Activated CD4-positive, alpha-beta memory T cell treated with anti-CD3 and anti-CD28 coated beads, Interleukin-2, amount 10 ng/mL, durations not matched to agents 7 days and 5 days (primary cell): ENCODE measurements at regions of chr6 and their contacts with region 1.

Region 1: GRCh38 chr6:41735427-41736356 is at the start of gene TFEB:
- DNase-seq: peak; percentile 95
- H3K4me3 Mint-ChIP-seq: peak within 1 kb of the TSS; percentile 79
- H3K27ac Mint-ChIP-seq: peak within 1 kb of the TSS; percentile 64
- H3K4me1 Mint-ChIP-seq: peaks cover 30% of the 10 kb centered on the region
- H3K27me3 Mint-ChIP-seq: peaks cover 2% of the 10 kb centered on the region
- total RNA-seq, gene TFEB: 14.9 to 15.0 TPM

Region 2: DNA sequence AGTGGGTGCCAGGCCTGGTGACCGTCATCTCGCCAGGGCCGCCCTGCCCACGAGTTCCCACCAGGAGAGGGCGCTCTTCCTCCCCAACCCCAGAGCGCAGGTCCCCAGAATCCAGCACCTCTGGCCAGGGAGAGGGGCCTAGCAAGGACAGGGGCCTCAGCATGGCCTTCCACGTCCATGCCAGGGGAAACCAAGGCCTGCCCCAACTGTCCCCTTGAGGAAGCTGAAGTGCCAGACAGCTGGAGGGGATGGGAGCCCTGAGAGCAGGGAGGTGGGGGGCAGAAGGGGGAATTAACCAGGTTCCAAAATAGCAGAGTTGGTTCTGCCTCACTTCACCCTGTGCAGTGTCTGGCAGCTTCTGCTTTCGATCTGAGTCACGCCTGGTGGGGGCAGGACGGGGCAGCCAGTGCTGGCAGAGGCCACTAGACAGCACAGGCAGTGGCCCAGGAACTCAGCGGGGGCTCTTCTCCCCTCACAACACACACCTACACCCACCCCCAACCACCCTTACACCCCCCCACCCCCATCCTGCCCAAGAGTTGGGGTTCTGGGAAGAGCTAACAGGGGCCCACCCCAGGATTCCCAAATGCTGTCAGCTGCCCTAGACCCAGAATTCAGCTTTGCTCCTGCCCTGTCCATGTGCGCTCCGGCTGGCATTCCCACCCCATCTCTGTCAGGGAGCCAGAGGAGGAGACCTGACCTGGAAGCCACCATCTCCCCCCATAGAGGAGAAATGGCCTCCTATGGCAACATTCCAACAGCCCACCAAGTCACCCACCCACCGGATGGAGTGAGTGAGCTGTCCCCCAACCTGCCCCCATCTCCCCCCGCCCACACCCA is 29.5 kb before region 1 on chr6:
- CTCF ChIA-PET with region 1: interaction called, 9 read pairs
- POLR2A ChIA-PET with region 1: interaction called, 35 read pairs
- DNase-seq: peak; percentile 81
- H3K4me3 Mint-ChIP-seq: peak overlapping the region; percentile 30
- H3K27ac Mint-ChIP-seq: peak overlapping the region; percentile 76
- H3K4me1 Mint-ChIP-seq: peaks cover 37% of the 10 kb centered on the region
- H3K27me3 Mint-ChIP-seq: no peaks in the 10 kb centered on the region

Region 3: GRCh38 chr6:41716516-41717391 is 18.9 kb before region 1 on chr6:
- CTCF ChIA-PET with region 1: interaction called, 7 read pairs
- POLR2A ChIA-PET with region 1: interaction called, 19 read pairs
- DNase-seq: no peak
- H3K4me3 Mint-ChIP-seq: no peak overlapping the region
- H3K27ac Mint-ChIP-seq: no peak overlapping the region
- H3K4me1 Mint-ChIP-seq: peaks cover 11% of the 10 kb centered on the region
- H3K27me3 Mint-ChIP-seq: no peaks in the 10 kb centered on the region